Endothelial cell of umbilical vein (primary cell): ENCODE measurements at regions of chr11 and their contacts with region 1.

Region 1: GRCh38 chr11:116397602-116398084 is 375.1 kb downstream of the BUD13 start:
- DNase-seq: no peak
- H3K4me3 ChIP-seq: no peak overlapping the region
- H3K27ac ChIP-seq: peak overlapping the region; percentile 84
- H3K4me1 ChIP-seq: peaks cover 18% of the 10 kb centered on the region
- H3K27me3 ChIP-seq: no peaks in the 10 kb centered on the region
- CTCF ChIP-seq: no peak
- POLR2A ChIP-seq: no peak

Region 2: GRCh38 chr11:116379185-116379828 is 18.3 kb before region 1 on chr11:
- CTCF ChIA-PET with region 1: no interaction called
- POLR2A ChIA-PET with region 1: no interaction called
- dilution Hi-C with region 1: no loop called
- intact Hi-C with region 1: no loop called
- DNase-seq: peak; percentile 47
- H3K4me3 ChIP-seq: no peak overlapping the region
- H3K27ac ChIP-seq: no peak overlapping the region
- H3K4me1 ChIP-seq: peaks cover under 1% of the 10 kb centered on the region
- H3K27me3 ChIP-seq: peaks cover 2 to 3% of the 10 kb centered on the region in 2 experiments
- CTCF ChIP-seq: no peak
- POLR2A ChIP-seq: no peak

Region 3: DNA sequence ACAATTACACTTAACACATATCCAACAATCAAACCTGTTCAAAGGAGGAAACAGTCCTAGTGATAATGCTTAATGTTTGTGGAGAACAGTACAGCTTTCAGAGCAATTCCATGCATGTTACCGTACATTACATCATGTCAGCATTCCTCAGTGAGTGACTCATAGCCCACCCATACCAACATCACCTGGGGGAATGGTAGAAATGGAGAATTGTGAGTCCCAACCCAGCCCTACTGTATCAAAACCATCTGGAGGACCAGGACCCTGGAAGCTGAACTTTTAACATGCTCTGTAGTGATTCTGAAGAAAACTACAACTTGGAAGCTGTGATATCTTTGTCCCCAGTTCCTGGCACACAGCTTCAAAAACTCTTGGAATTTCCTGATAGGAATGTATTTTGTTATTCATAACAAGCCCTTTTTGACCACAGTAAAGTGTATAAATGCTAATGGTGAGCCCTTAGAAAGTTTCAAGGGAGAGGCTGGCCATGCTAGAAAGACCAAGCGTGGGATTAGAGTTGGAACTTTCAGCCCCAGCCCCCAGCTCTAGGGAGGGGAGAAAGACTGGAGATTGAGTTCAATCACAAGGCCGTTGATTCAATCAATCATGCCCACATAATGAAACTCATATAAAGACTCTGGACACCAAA is 74.1 kb after region 1 on chr11:
- CTCF ChIA-PET with region 1: interaction called, 4 read pairs
- POLR2A ChIA-PET with region 1: interaction called, 4 read pairs
- dilution Hi-C with region 1: no loop called
- intact Hi-C with region 1: loop called (anchors 2 kb)
- DNase-seq: peak; percentile 96
- H3K4me3 ChIP-seq: no peak overlapping the region
- H3K27ac ChIP-seq: peak overlapping the region; percentile 75
- H3K4me1 ChIP-seq: peaks cover 25% of the 10 kb centered on the region
- H3K27me3 ChIP-seq: peaks cover under 1 to 2% of the 10 kb centered on the region in 2 experiments
- CTCF ChIP-seq: no peak
- POLR2A ChIP-seq: no peak